ENCODE measurements at regions of chr5 and their contacts with region 1.

Region 1: DNA sequence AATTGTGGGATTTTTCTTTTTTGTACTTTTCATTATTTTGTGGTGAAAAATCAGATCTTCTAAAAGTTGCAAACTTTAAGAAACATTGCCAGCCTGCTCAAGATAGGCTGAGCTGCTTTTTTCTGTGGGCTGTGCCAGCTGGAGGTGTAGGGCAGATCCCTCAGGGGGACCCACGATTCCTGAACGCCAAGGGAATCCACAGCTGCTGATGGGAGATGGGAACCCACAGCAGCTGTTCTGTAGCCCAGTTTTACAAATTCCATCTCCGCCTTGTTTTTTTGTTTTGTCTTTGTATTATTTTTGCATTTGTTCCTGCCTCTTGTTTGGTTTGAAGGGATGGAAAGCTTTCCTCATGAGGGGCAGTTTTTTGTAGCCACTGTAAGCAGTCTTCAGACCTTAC is 91.0 kb downstream of the WWC1 start:
- DNase-seq: no peak
- ATAC-seq: no peak

Region 2: DNA sequence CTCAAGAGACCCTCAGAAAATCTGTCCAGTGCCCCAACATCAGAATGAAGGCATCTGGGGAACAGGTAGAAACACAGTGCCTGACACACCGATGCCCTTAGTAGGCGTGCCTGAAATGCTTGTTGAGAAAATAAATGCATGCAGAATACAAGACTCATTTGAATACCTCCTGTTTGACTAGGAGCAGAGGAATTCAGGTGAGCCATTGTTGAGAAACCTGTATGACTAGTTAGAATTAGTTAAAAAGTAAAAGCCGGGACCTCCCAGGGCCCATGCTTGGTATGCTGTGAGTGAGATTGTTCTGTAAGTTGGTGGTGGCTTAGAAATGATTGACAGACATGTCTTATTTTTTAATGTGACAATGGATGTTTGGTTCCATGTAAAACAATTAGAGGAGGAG is 36.0 kb before region 1 on chr5:
- intact Hi-C with region 1: loop called (anchors 1 kb)
- DNase-seq: no peak
- ATAC-seq: no peak